Activated CD4-positive, alpha-beta T cell treated with anti-CD3 and anti-CD28 coated beads for 36 hours (primary cell): ENCODE measurements at regions of chr4 and their contacts with region 1.

Region 1: GRCh38 chr4:21765810-21766407 is 182.7 kb downstream of the KCNIP4 start:
- DNase-seq: peak; percentile 46
- ATAC-seq: no peak
- H3K4me3 Mint-ChIP-seq: no peak overlapping the region
- H3K27ac Mint-ChIP-seq: no peak overlapping the region
- H3K4me1 Mint-ChIP-seq: no peaks in the 10 kb centered on the region
- H3K27me3 Mint-ChIP-seq: peaks cover 7% of the 10 kb centered on the region

Region 2: GRCh38 chr4:20422398-20422797 is 1343.5 kb before region 1 on chr4:
- CTCF ChIA-PET with region 1: no interaction called
- POLR2A ChIA-PET with region 1: no interaction called
- intact Hi-C with region 1: loop called (anchors 2 to 10 kb)
- DNase-seq: peak; percentile 51
- ATAC-seq: peak; percentile 59
- H3K4me3 Mint-ChIP-seq: no peak overlapping the region
- H3K27ac Mint-ChIP-seq: no peak overlapping the region
- H3K4me1 Mint-ChIP-seq: peaks cover 8% of the 10 kb centered on the region
- H3K27me3 Mint-ChIP-seq: peaks cover 2% of the 10 kb centered on the region

Region 3: GRCh38 chr4:20773144-20773997 is 992.5 kb before region 1 on chr4:
- CTCF ChIA-PET with region 1: interaction called, 15 read pairs
- POLR2A ChIA-PET with region 1: no interaction called
- intact Hi-C with region 1: loop called (anchors 1 to 5 kb)
- DNase-seq: peak; percentile 38
- ATAC-seq: peak; percentile 51
- H3K4me3 Mint-ChIP-seq: no peak overlapping the region
- H3K27ac Mint-ChIP-seq: no peak overlapping the region
- H3K4me1 Mint-ChIP-seq: no peaks in the 10 kb centered on the region
- H3K27me3 Mint-ChIP-seq: no peaks in the 10 kb centered on the region

Region 4: DNA sequence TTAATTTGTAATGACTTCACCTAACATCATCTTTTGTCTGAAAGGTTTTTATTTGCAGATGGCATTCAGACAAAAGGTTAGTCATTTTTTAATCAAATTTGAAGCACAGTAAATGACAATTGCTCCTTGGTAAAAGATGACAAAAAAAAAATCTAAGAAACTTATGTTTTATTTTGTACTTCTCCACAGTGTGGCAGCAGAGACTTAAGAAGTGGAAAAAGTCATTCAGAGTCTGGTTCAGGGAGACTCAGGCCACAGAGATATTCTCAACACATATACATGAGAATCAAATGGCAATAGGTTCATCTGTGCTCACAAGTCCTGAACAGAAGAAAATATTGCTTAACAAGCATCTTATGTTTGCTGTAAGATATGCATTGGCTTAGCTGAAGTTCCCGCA is 253.6 kb before region 1 on chr4:
- CTCF ChIA-PET with region 1: interaction called, 27 read pairs
- POLR2A ChIA-PET with region 1: no interaction called
- intact Hi-C with region 1: loop called (anchors 1 kb)
- DNase-seq: no peak
- ATAC-seq: no peak
- H3K4me3 Mint-ChIP-seq: no peak overlapping the region
- H3K27ac Mint-ChIP-seq: no peak overlapping the region
- H3K4me1 Mint-ChIP-seq: no peaks in the 10 kb centered on the region
- H3K27me3 Mint-ChIP-seq: no peaks in the 10 kb centered on the region

Region 5: GRCh38 chr4:21790438-21791029 is 24.6 kb after region 1 on chr4:
- CTCF ChIA-PET with region 1: interaction called, 11 read pairs
- POLR2A ChIA-PET with region 1: no interaction called
- intact Hi-C with region 1: no loop called
- DNase-seq: no peak
- ATAC-seq: no peak
- H3K4me3 Mint-ChIP-seq: no peak overlapping the region
- H3K27ac Mint-ChIP-seq: no peak overlapping the region
- H3K4me1 Mint-ChIP-seq: no peaks in the 10 kb centered on the region
- H3K27me3 Mint-ChIP-seq: no peaks in the 10 kb centered on the region